Left ventricle myocardium superior (tissue), 1 donor: ENCODE measurements at regions of chr1 and their contacts with region 1.

Region 1: DNA sequence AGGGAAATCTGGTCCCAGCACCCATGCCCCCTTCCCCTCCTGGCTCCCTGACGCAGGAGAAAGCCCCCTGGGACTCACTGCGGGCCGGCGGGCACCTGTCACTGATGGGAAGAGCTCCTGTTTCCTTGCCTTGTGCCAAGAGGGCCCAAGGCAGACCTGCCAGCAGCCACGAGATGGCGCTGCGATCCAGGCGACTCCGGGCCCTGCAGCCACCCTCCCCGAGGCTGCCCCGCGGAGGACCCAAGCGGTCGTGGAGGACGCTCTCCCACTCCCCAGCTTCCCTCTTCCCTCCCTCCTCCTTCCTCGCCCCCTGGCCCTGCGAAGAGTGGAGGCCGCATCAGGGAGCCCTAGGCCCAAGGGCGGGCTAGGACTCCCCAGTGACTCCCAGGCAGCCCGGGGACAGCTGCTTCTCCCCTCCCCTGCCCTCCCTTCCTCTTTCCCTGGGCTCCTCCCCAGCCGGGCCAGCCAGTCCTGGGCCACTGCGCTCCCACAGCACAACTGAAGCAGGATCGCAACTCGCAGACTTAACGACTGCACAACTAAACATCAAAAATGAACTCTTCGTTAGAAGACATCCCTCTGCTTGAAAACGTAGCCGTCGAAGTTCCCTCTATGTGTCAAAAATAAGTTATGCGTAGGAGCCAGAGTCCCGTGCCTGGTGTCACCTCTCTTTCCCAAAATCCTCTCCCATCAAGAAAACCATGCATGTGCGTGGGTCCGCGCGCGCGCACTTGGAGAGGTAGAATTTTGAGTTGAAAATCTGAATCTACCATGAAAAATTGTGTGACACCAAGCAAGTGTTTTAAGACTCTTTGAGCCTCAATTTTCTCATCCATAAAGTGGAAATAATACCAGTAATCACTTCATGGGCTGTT is 34.2 kb downstream of the BATF3 start:
- DNase-seq: peak; percentile 90
- ATAC-seq: peak; percentile 98

Region 2: DNA sequence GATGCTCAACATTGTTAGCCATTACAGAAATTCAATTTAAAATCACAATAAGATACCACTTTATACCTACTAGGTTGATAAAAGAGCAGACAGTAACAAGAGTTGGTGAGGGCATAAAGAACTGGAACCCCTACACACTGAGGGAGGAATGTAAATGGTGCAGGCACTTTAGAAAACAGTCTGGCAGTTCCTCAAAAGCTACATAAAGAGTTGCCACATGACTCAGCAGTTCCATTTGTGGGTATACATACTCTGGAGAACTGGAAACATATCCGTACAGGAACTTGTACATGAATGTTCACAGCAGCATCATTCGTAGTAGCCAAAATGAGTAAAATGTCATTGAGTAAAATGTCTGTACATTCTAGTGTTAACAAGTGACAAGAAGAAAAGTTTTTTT is 109.1 kb after region 1 on chr1:
- intact Hi-C with region 1: loop called (anchors 10 kb)
- DNase-seq: no peak
- ATAC-seq: peak; percentile 47

Region 3: GRCh38 chr1:213041443-213041842 is 376.0 kb after region 1 on chr1:
- intact Hi-C with region 1: no loop called
- DNase-seq: no peak
- ATAC-seq: no peak

Region 4: GRCh38 chr1:213969958-213970555 is 1304.6 kb after region 1 on chr1:
- intact Hi-C with region 1: no loop called
- DNase-seq: no peak
- ATAC-seq: no peak